ENCODE measurements at regions of chr6 and their contacts with region 1.

Region 1: GRCh38 chr6:32796848-32797776 is 19.7 kb downstream of the HLA-DOB start:
- DNase-seq: peak; percentile 84
- ATAC-seq: peak; percentile 84
- H3K4me3 ChIP-seq: peak overlapping the region; percentile 45
- H3K27ac ChIP-seq: no peak overlapping the region
- H3K4me1 ChIP-seq: no peaks in the 10 kb centered on the region
- H3K27me3 ChIP-seq: peaks cover 79% of the 10 kb centered on the region
- CTCF ChIP-seq: peak; percentile 85

Region 2: GRCh38 chr6:32432050-32432450 is 365.1 kb before region 1 on chr6:
- CTCF ChIA-PET with region 1: interaction called, 3 read pairs
- POLR2A ChIA-PET with region 1: no interaction called
- intact Hi-C with region 1: loop called (anchors 5 kb)
- DNase-seq: peak; percentile 51
- ATAC-seq: no peak
- H3K4me3 ChIP-seq: no peak overlapping the region
- H3K27ac ChIP-seq: no peak overlapping the region
- H3K4me1 ChIP-seq: no peaks in the 10 kb centered on the region
- H3K27me3 ChIP-seq: peaks cover 36% of the 10 kb centered on the region
- CTCF ChIP-seq: peak; percentile 63

Measured in PC-3 (cell line).